ENCODE measurements at regions of chr7 and their contacts with region 1.

Region 1: DNA sequence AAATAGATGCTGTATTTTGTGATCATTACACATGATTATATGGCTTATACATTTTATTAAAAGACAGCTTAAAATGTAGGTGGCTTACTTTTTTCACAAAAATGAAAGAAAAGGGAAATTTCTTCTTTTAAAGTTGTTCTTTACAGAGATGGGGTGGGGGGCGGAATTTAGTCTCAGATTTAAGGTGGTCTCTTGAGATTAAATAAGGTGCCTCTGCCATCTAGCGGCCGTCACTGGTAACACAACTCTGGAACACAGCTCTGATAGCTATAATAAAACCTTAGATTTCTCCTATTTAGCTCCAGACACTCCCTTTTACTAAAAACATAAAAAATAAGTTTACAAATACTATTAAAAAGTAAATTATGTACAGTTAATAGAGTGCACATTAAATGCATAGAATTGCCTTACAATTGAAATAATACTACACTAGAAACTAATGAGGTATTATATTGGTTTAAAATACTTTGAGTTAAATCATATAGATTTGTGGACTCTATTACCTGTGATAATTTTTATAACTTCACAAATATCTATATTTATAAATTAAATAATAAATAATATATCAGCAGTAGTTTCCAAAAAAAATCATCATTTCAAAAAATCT is 210.9 kb downstream of the DGKB start:
- DNase-seq: peak; percentile 42
- H3K4me3 ChIP-seq: no peak overlapping the region
- H3K27ac ChIP-seq: no peak overlapping the region
- H3K4me1 ChIP-seq: peaks cover 8% of the 10 kb centered on the region
- H3K27me3 ChIP-seq: no peaks in the 10 kb centered on the region
- CTCF ChIP-seq: peak; percentile 61 to 72
- POLR2A ChIP-seq: no peak

Region 2: DNA sequence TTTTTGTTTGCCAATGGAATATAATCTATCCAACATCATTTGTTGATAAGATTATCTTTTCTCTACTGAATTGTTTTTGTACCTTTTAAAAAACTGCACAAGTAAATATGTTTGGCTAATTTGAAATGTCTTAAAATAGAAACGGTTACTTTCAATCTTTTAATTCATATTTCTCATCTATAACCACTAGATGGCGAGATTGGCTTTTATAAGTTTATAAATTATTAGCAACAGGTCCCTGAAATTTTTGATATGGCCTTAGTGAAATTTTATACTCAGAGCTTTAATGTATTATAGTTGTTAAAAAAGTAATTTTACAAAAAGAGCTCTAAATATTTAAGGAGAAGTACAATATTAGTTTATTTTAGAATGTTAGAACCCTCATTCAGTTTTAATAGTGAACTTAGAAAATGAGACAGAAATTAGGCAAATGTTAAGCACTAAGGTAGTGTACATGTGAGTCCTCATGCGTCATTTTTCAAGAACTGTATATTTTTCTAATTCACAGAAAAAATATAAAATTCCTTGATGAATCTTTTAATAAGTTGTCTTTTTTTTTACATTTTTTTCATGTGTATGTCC is 1411.8 kb before region 1 on chr7:
- CTCF ChIA-PET with region 1: interaction called, 424 read pairs
- POLR2A ChIA-PET with region 1: interaction called, 4 read pairs
- dilution Hi-C with region 1: no loop called
- intact Hi-C with region 1: loop called (anchors 1 kb)
- DNase-seq: peak; percentile 24
- H3K4me3 ChIP-seq: no peak overlapping the region
- H3K27ac ChIP-seq: no peak overlapping the region
- H3K4me1 ChIP-seq: no peaks in the 10 kb centered on the region
- H3K27me3 ChIP-seq: no peaks in the 10 kb centered on the region
- CTCF ChIP-seq: peak in 1 of 2 donors; percentile 18
- POLR2A ChIP-seq: no peak

Region 3: GRCh38 chr7:13524076-13524475 is 1167.6 kb before region 1 on chr7:
- CTCF ChIA-PET with region 1: interaction called, 30 read pairs
- POLR2A ChIA-PET with region 1: no interaction called
- dilution Hi-C with region 1: no loop called
- intact Hi-C with region 1: loop called (anchors 1 kb)
- DNase-seq: no peak
- H3K4me3 ChIP-seq: no peak overlapping the region
- H3K27ac ChIP-seq: no peak overlapping the region
- H3K4me1 ChIP-seq: no peaks in the 10 kb centered on the region
- H3K27me3 ChIP-seq: no peaks in the 10 kb centered on the region
- CTCF ChIP-seq: no peak
- POLR2A ChIP-seq: no peak

Region 4: DNA sequence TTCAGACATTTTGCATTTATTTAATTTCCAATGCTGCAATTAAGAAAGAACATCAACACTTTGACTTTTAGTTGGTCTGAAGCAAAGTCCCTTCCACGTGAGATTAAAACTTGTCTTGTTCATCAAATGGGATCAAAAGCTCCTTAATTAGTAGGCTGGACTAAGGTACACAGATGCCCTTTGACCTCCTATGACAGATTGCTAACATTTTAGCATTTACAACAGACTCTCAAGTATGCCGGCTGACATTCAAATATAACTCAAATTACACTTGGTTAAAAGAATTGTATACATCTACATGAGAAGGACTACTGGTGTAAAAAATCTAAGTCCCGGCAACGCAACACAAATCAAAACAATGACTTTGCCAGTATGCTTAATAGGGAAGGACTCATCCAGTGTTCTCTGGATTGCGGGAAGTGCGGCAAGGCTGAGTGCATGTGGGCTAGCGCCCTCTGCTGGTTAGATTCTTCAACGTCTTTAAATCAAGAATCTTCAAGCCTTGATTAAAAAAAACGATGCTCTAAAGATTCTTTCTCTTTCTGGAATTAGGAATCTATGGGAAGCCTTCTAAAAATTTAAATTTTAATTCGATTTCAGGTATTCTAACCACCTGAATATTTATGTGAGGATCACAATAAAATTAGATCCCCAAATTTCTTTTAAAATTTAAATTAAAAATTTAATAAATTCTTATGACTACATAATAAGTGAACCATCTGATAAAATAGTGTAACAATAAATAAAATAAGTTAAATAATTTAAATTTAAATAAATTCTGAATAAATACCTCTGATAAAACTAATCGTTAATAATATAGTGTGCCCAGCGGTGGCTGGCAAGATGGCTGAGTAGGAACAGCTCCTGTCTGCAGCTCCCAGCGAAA is 233.9 kb before region 1 on chr7:
- CTCF ChIA-PET with region 1: interaction called, 10 read pairs
- POLR2A ChIA-PET with region 1: no interaction called
- dilution Hi-C with region 1: no loop called
- intact Hi-C with region 1: loop called (anchors 2 kb)
- DNase-seq: peak; percentile 79
- H3K4me3 ChIP-seq: no peak overlapping the region
- H3K27ac ChIP-seq: no peak overlapping the region
- H3K4me1 ChIP-seq: no peaks in the 10 kb centered on the region
- H3K27me3 ChIP-seq: no peaks in the 10 kb centered on the region
- CTCF ChIP-seq: peak; percentile 71 to 73
- POLR2A ChIP-seq: no peak

Region 5: GRCh38 chr7:14630048-14630447 is 61.7 kb before region 1 on chr7:
- CTCF ChIA-PET with region 1: interaction called, 15 read pairs
- POLR2A ChIA-PET with region 1: no interaction called
- dilution Hi-C with region 1: no loop called
- intact Hi-C with region 1: no loop called
- DNase-seq: no peak
- H3K4me3 ChIP-seq: no peak overlapping the region
- H3K27ac ChIP-seq: no peak overlapping the region
- H3K4me1 ChIP-seq: no peaks in the 10 kb centered on the region
- H3K27me3 ChIP-seq: no peaks in the 10 kb centered on the region
- CTCF ChIP-seq: no peak
- POLR2A ChIP-seq: no peak

Region 6: GRCh38 chr7:14666304-14666703 is 25.4 kb before region 1 on chr7:
- CTCF ChIA-PET with region 1: interaction called, 14 read pairs
- POLR2A ChIA-PET with region 1: no interaction called
- dilution Hi-C with region 1: no loop called
- intact Hi-C with region 1: no loop called
- DNase-seq: no peak
- H3K4me3 ChIP-seq: no peak overlapping the region
- H3K27ac ChIP-seq: no peak overlapping the region
- H3K4me1 ChIP-seq: no peaks in the 10 kb centered on the region
- H3K27me3 ChIP-seq: no peaks in the 10 kb centered on the region
- CTCF ChIP-seq: no peak
- POLR2A ChIP-seq: no peak

Region 7: GRCh38 chr7:14871880-14872279 is 180.2 kb after region 1 on chr7:
- CTCF ChIA-PET with region 1: no interaction called
- POLR2A ChIA-PET with region 1: no interaction called
- dilution Hi-C with region 1: no loop called
- intact Hi-C with region 1: no loop called
- DNase-seq: no peak
- H3K4me3 ChIP-seq: no peak overlapping the region
- H3K27ac ChIP-seq: no peak overlapping the region
- H3K4me1 ChIP-seq: no peaks in the 10 kb centered on the region
- H3K27me3 ChIP-seq: no peaks in the 10 kb centered on the region
- CTCF ChIP-seq: no peak
- POLR2A ChIP-seq: no peak